Activated CD8-positive, alpha-beta T cell treated with anti-CD3 and anti-CD28 coated beads, Interleukin-2, amount 10 ng/mL, durations not matched to agents 7 days and 5 days (primary cell): ENCODE measurements at regions of chr16 and their contacts with region 1.

Region 1: GRCh38 chr16:3074860-3075522 is 9.6 kb downstream of the IL32 start:
- DNase-seq: peak; percentile 95
- ATAC-seq: peak; percentile 85
- H3K4me3 Mint-ChIP-seq: peak overlapping the region; percentile 73
- H3K27ac Mint-ChIP-seq: peak overlapping the region; percentile 94
- H3K4me1 Mint-ChIP-seq: peaks cover 92% of the 10 kb centered on the region
- H3K27me3 Mint-ChIP-seq: no peaks in the 10 kb centered on the region

Region 2: DNA sequence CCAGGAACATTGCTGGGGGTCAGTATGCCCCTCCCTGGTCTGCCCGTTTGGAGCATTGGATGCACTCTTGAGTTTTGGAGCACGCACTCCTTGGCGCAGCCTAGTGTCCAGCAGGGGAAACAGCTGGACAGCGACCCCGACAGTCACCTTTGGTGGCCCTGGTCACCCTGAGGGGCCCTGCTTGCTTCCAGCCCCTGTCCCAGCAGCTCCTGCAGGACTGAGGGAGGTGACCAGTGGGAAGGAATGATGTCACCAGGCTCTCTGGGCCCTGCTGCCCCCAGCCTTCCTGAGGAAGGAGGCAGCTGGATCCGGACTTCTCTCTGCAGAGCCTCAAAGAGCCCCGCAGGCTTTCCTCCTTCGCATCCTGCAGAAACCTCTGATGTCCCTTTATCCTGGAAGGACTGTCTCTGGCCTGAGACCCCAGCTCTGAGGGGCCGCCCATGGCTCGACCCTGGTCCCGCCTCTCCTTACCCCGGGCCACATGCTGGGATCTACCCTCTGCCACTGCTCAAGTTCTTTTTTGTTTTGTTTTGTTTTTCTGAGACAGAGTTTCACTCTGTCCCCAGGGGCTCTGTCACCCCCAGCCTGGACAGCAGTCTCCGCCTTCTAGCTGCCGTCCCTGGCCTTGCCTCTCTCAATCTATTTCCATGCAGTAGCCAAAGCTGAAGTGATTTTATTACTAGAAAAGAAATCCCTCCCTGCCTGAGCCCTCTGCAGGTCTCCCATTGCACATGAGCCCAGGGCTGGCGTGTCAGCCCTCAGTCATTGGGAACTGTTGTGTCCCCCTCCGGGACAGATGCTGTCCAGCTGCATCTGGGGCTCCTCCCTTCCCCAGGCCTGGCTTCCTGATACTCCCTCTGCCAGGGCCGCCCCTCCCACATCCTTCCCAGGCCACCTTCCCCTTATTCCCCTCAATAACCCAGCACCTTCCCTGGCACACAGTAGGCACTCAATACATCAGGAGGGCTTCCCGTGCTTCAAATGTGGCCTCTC is 12.5 kb after region 1 on chr16:
- CTCF ChIA-PET with region 1: interaction called, 32 read pairs
- POLR2A ChIA-PET with region 1: interaction called, 5 read pairs
- DNase-seq: no peak
- ATAC-seq: peak; percentile 30
- H3K4me3 Mint-ChIP-seq: no peak overlapping the region
- H3K27ac Mint-ChIP-seq: peak overlapping the region; percentile 55
- H3K4me1 Mint-ChIP-seq: peaks cover 57% of the 10 kb centered on the region
- H3K27me3 Mint-ChIP-seq: no peaks in the 10 kb centered on the region

Region 3: DNA sequence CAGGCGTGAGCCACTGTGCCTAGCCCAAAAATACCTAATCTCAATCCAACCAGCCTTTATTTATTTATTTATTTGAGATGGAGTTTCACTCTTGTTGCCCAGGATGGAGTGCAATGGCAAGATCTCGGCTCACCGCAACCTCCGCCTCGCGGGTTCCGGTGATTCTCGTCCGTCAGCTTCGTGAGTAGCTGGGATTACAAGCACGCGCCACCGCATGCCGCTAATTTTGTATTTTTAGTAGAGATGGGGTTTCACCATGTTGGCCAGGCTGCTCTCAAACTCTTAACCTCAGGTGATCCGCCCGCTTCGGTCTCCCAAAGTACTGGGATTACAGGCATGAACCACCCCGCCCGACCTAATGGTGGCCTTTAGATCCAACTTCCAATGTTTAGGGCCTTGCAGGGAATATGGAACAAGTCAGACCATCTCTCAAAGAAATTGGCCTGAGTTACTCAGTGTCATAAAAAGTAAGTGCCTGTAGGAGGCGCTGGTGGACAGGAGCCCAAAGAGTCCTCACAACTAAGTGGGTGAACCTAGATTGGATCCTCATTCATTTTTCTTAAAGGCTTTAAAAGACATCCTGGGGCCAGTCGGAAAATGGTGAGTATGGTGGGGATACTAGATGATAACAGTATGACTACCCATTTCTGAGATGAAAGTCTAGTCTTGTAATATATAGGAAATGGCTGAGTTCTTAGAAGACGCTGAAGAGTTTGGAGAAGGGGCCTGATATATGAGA is 19.5 kb after region 1 on chr16:
- CTCF ChIA-PET with region 1: interaction called, 56 read pairs
- POLR2A ChIA-PET with region 1: interaction called, 32 read pairs
- DNase-seq: peak; percentile 67
- ATAC-seq: peak; percentile 38
- H3K4me3 Mint-ChIP-seq: no peak overlapping the region
- H3K27ac Mint-ChIP-seq: peak overlapping the region; percentile 69
- H3K4me1 Mint-ChIP-seq: peaks cover 65% of the 10 kb centered on the region
- H3K27me3 Mint-ChIP-seq: peaks cover 2% of the 10 kb centered on the region

Region 4: GRCh38 chr16:3099732-3100499 is 24.9 kb after region 1 on chr16:
- CTCF ChIA-PET with region 1: interaction called, 56 read pairs
- POLR2A ChIA-PET with region 1: interaction called, 32 read pairs
- DNase-seq: peak; percentile 96
- ATAC-seq: peak; percentile 85
- H3K4me3 Mint-ChIP-seq: peak overlapping the region; percentile 69
- H3K27ac Mint-ChIP-seq: peak overlapping the region; percentile 71
- H3K4me1 Mint-ChIP-seq: peaks cover 74% of the 10 kb centered on the region
- H3K27me3 Mint-ChIP-seq: peaks cover 2% of the 10 kb centered on the region